GM23248 (cell line): ENCODE measurements at regions of chr18 and their contacts with region 1.

Region 1: GRCh38 chr18:23356915-23357601 is 96.0 kb upstream of the RIOK3 start:
- DNase-seq: peak; percentile 54
- H3K4me3 ChIP-seq: no peak overlapping the region
- H3K27ac ChIP-seq: peak overlapping the region; percentile 40
- H3K4me1 ChIP-seq: peaks cover 36% of the 10 kb centered on the region
- H3K27me3 ChIP-seq: no peaks in the 10 kb centered on the region

Region 2: DNA sequence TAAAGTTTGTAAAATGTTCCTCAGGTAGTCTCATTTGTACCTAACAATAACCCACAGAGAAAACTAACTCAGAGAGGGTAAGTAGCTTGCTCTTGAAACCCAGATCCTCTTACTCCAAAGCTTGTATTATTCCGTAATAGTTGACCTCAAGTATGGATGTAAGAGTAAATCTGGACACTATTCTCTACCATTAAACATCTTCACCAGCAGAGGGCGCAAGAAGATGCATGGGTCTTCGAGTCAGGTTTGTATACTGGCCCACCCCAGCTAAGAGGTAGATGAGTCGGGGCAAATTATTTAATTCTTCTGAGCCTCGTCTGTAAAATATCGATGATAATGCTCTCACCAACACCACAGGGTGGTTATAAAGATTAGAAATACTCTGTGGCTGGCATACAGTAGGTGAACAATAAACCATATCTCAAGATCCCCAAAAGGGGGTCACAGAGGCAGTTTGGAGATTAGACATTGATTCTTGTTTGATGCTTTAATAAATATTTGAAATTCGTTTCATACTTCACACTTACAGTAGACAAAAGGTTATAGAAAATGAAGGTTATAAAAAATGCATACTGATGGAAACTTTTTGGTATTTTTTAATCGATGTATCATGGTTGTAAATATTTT is 225.3 kb before region 1 on chr18:
- in situ Hi-C with region 1: loop called (anchors 10 kb)
- DNase-seq: peak; percentile 83
- H3K4me3 ChIP-seq: no peak overlapping the region
- H3K27ac ChIP-seq: no peak overlapping the region
- H3K4me1 ChIP-seq: peaks cover 6% of the 10 kb centered on the region
- H3K27me3 ChIP-seq: no peaks in the 10 kb centered on the region

Region 3: GRCh38 chr18:23231340-23232021 is 125.6 kb before region 1 on chr18:
- in situ Hi-C with region 1: loop called (anchors 10 kb)
- DNase-seq: peak; percentile 98
- H3K4me3 ChIP-seq: peak overlapping the region; percentile 35
- H3K27ac ChIP-seq: peak overlapping the region; percentile 97
- H3K4me1 ChIP-seq: peaks cover 58% of the 10 kb centered on the region
- H3K27me3 ChIP-seq: no peaks in the 10 kb centered on the region